Heart left ventricle (tissue), 16 donors: ENCODE measurements at regions of chr9 and their contacts with region 1.

Region 1: DNA sequence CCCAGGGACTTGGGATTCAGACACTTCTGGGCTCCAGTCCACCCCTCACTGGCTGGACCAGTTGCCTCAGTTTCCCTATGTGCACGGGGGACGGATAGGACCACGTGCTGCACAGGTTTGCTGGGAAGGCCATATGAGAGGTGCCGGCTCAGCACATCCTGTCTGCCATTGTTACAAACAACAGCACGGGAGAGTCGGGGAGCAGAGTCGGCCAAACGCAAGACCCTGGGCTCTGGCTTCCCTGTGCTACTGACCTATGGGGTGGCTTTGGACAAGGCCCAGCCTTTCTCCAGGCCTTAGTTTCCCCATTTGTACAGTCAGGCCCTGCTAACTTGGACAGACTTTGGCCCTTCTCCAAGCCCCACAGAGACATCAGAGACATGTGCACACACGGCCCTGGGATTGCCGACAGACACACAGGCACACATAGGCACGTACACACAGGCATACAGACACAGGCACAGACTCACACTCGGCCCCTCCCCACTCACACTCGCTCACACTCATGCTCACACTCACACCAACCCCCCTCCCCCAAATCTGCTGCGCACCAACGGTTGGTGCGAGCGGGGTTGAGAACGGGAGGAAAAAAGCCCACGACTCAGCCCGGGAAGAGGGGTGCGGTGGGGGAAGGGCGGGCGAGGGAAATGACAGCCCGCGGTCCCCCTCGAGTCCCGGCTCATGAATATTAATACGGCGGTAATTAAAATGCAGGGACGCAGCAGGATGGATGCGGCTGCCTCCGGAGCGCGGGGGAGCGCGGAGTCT is 133.1 kb downstream of the C9orf50 start:
- DNase-seq: peak; percentile 56 to 79 (median 72)
- ATAC-seq: peak in 2 of 4 donors; percentile 2 to 3
- H3K4me3 ChIP-seq: peak overlapping the region; percentile 21 to 68 (median 60)
- H3K27ac ChIP-seq: peak overlapping the region; percentile 93 to 100 (median 99)
- H3K4me1 ChIP-seq: peaks cover 23 to 93% (median 73%) of the 10 kb centered on the region in 12 donors
- H3K27me3 ChIP-seq: no peaks in the 10 kb centered on the region
- CTCF ChIP-seq: no peak
- POLR2A ChIP-seq: no peak

Region 2: GRCh38 chr9:129166623-129167557 is 320.9 kb before region 1 on chr9:
- intact Hi-C with region 1: loop called in 3 of 10 experiments (anchors 2 to 10 kb)
- DNase-seq: peak; percentile 70 to 81 (median 79)
- ATAC-seq: peak; percentile 69 to 83 (median 78)
- H3K4me3 ChIP-seq: peak overlapping the region in 9 of 12 donors; percentile 18 to 47 (median 36)
- H3K27ac ChIP-seq: peak overlapping the region; percentile 15 to 89 (median 78)
- H3K4me1 ChIP-seq: peaks cover 0 to 53% (median 23%) of the 10 kb centered on the region in 12 donors
- H3K27me3 ChIP-seq: no peaks in the 10 kb centered on the region
- CTCF ChIP-seq: no peak
- POLR2A ChIP-seq: peak in 1 of 2 donors; percentile 31

Region 3: GRCh38 chr9:129333953-129334724 is 153.7 kb before region 1 on chr9:
- intact Hi-C with region 1: loop called in 4 of 10 experiments (anchors 2 to 5 kb)
- DNase-seq: peak; percentile 92 to 95 (median 94)
- ATAC-seq: peak; percentile 85 to 94 (median 89)
- H3K4me3 ChIP-seq: peak overlapping the region in 9 of 12 donors; percentile 16 to 40 (median 25)
- H3K27ac ChIP-seq: peak overlapping the region; percentile 39 to 97 (median 88)
- H3K4me1 ChIP-seq: peaks cover 12 to 65% (median 43%) of the 10 kb centered on the region in 12 donors
- H3K27me3 ChIP-seq: no peaks in the 10 kb centered on the region
- CTCF ChIP-seq: no peak
- POLR2A ChIP-seq: peak in 1 of 2 donors; percentile 46

Region 4: GRCh38 chr9:129427149-129427548 is 60.7 kb before region 1 on chr9:
- intact Hi-C with region 1: no loop called
- DNase-seq: peak in 1 of 5 donors; percentile 3
- ATAC-seq: no peak
- H3K4me3 ChIP-seq: no peak overlapping the region
- H3K27ac ChIP-seq: no peak overlapping the region
- H3K4me1 ChIP-seq: peaks cover 0 to 17% (median 2%) of the 10 kb centered on the region in 12 donors
- H3K27me3 ChIP-seq: no peaks in the 10 kb centered on the region
- CTCF ChIP-seq: no peak
- POLR2A ChIP-seq: no peak

Region 5: GRCh38 chr9:129602598-129603415 is 115.0 kb after region 1 on chr9:
- intact Hi-C with region 1: loop called in 5 of 10 experiments (anchors 2 to 5 kb)
- DNase-seq: no peak
- ATAC-seq: no peak
- H3K4me3 ChIP-seq: no peak overlapping the region
- H3K27ac ChIP-seq: peak overlapping the region in 1 of 12 donors; percentile 17
- H3K4me1 ChIP-seq: peaks cover 0 to 27% (median 16%) of the 10 kb centered on the region in 12 donors
- H3K27me3 ChIP-seq: peaks cover 0 to 14% (median 0%) of the 10 kb centered on the region in 9 donors
- CTCF ChIP-seq: no peak
- POLR2A ChIP-seq: no peak